ENCODE measurements at regions of chr6 and their contacts with region 1.

Region 1: DNA sequence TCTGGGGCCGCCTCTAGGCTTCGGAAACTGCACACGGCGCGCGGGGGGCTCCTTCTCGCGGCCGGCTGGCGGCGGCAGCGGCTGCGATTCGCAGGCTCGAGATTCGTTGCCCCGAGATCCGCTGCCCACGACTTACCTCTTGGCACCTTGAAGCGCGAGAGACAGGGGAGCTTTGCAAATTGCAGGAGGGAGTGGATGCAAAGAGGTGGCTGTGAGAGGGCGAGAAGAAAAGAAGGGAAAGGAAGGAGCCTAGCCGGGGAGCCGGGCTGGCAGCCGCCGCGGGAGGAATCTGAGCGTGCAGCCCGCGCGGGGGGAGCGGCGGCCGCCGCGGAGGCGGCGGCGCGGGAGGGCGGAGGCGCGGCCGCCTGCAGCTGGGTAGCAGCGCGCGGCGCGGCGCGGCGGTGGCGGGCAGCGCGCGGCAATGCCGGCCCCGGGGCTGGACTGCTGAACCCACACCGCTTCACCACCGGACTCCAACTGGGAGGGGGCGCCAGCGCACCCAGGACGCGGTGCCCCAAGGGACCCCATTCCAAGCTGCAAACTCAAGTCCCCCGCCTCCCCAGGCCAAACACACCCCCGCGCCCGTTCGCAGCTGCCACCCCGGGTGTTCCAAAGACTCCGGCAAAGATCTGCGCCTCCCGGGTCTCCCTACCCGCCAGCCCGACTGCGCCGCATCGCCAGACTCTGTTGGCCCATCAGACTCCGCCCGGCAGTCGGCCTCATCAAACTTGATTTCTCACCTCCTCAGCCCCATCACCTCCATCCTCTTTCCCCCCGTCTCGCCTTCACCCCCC is 44.2 kb upstream of the SUPT3H start:
- DNase-seq: peak; percentile 49 to 76
- H3K4me3 ChIP-seq: peak overlapping the region; percentile 98
- H3K27ac ChIP-seq: peak overlapping the region; percentile 72
- H3K4me1 ChIP-seq: peaks cover 22% of the 10 kb centered on the region
- H3K27me3 ChIP-seq: no peaks in the 10 kb centered on the region
- CTCF ChIP-seq: peak; percentile 17; the same call in 1 of the 2 replicates

Region 2: DNA sequence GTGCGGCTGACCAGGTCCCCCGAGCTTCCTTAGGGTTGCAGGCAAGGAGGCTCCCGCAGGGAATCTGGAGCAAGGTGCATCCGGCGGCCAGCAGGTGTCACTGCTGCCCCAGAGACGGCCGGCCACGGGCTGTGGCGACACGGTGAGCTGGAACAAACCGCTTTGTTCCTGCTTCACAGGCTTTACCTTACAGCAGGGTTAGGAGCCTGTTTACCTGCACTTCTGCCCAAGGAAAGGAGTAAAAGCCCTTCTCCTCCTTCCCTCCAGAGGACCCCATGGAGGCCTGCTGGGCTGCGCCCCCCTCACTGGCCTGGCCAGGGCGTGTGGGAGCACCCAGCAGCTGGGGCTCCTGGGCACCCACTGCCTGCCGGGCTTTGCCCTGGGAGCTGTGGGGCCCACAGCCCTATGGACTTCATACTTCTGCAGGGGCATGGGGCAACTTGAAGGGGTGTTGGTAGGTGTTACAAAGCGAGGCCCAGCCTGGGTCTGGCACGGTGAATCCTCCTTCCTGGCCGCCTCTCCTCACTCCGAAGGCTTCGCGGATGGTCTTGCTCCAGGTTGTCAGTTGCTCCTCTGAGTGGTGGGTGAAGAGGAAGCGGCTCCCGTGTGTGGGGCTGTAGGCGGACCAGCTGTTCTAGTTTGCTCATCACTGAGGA is 946.0 kb before region 1 on chr6:
- CTCF ChIA-PET with region 1: interaction called, 6 read pairs
- POLR2A ChIA-PET with region 1: no interaction called
- intact Hi-C with region 1: loop called (anchors 2 kb)
- DNase-seq: peak; percentile 54 to 86
- H3K4me3 ChIP-seq: no peak overlapping the region
- H3K27ac ChIP-seq: no peak overlapping the region
- H3K4me1 ChIP-seq: peaks cover 18% of the 10 kb centered on the region
- H3K27me3 ChIP-seq: no peaks in the 10 kb centered on the region
- CTCF ChIP-seq: peak; percentile 92

Region 3: DNA sequence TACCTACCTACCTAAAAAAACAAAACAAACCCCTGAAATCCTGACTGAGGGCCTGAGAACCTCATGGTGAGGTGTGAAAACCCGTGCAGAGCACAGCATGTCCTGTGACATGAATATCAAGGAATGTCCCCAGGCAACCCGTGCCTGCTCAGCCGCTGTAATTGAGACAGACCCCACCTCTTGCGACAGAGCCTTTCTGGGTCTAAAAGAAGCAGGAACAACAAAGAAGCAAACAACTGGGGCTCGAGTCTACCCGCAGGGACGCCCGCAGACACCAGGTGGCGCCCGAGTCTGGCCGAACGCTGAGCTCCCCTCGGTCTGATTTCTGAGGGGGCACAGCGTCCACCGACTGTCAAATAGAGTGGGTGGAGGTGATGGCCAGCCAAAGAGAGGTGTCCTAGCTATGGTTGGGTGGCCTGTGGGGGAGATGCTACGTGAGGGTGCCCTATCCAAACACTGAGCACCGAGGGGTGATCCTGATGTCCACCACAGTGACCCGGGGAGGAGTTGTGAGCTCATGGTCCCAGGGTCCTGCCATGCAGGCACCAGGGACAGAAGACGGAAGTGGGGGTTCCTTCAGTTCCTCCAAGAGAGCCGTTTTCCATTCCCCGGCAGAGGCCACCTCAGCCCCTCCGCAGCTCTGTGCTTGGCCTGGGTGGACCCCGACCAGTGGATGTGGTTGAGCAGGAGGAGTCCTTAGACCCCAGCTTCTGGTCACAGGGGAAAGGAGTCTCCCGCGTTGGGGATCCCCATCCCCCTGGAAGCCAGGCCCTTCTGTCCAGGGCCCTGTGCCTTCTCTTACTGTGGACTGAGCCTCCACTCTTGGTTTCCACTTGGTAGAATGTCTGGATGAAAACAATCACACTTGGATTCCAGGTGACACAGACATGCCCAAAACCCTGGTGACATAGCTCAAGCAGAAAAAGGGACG is 766.2 kb before region 1 on chr6:
- CTCF ChIA-PET with region 1: no interaction called
- POLR2A ChIA-PET with region 1: no interaction called
- intact Hi-C with region 1: loop called (anchors 1 kb)
- DNase-seq: peak; percentile 77 to 79
- H3K4me3 ChIP-seq: no peak overlapping the region
- H3K27ac ChIP-seq: peak overlapping the region; percentile 34; the same call in 1 of the 2 replicates
- H3K4me1 ChIP-seq: peaks cover 10% of the 10 kb centered on the region; the same call in 1 of the 2 replicates
- H3K27me3 ChIP-seq: no peaks in the 10 kb centered on the region
- CTCF ChIP-seq: peak; percentile 98

Region 4: GRCh38 chr6:45377554-45378333 is 44.2 kb before region 1 on chr6 and contains the start of gene SUPT3H:
- CTCF ChIA-PET with region 1: no interaction called
- POLR2A ChIA-PET with region 1: interaction called, 3 read pairs
- intact Hi-C with region 1: loop called (anchors 5 kb)
- DNase-seq: peak; percentile 76 to 89
- H3K4me3 ChIP-seq: peak within 1 kb of the TSS; percentile 93
- H3K27ac ChIP-seq: peak within 1 kb of the TSS; percentile 94
- H3K4me1 ChIP-seq: peaks cover 8% of the 10 kb centered on the region
- H3K27me3 ChIP-seq: no peaks in the 10 kb centered on the region
- CTCF ChIP-seq: no peak
- total RNA-seq, gene SUPT3H: 9.0 and 9.2 TPM in 2 replicates

Region 5: DNA sequence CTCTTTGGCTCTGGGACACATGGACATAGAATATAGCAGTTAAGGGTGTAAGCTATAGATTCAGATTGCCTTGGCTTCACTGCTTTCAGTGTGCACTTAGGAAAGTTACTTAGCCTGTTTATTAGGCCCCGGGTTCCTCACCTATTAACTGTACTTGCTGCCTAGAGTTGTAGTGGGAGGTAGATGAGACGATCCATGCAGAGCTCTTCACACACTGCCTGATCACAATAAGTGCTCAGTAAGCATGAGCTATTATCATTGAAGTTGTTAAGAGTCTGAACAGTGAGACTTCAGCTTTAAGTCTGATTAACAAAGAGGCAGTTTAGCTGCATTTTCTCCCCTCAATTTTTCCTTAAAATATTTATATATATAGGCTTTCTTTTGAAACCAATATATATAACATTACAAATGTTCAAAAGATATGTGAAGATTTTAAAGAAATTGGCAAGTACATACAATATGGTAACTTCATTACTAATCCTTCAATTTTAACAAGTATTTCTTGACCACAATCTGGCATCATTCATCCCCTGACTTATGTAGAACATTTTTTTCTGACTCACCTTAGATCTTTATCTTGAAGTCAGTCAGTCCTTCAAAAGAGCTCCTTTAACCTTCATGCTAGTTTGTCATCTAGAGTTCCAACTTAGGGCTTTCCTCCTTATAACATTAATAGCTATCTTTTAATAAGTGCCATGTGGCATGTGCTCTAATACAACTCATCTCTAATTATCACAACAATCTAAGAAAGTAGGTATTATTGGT is 23.6 kb before region 1 on chr6:
- CTCF ChIA-PET with region 1: no interaction called
- POLR2A ChIA-PET with region 1: no interaction called
- intact Hi-C with region 1: no loop called
- DNase-seq: peak in 1 of 2 experiments; percentile 81
- H3K4me3 ChIP-seq: no peak overlapping the region
- H3K27ac ChIP-seq: no peak overlapping the region
- H3K4me1 ChIP-seq: peaks cover 9% of the 10 kb centered on the region; the same call in 1 of the 2 replicates
- H3K27me3 ChIP-seq: no peaks in the 10 kb centered on the region
- CTCF ChIP-seq: no peak

Region 6: DNA sequence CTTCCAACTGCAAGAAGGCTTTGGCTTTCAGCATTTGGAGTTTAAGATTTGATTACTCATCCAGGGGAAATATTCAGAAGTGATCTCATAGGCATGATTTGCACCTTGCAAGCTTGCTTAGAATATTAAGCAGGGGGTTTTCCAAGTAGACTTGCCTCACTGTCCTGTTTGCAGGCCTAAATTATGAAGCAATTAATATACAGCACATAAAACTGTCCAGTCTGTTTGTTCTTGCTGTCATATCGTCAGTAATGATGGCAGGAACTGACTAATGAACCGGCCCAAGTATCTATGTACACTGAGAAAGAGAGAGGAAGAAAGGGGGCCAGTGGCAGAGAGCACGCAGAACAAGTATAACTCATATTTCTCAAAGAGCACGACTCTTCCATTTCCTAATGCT is 168.3 kb after region 1 on chr6:
- CTCF ChIA-PET with region 1: no interaction called
- POLR2A ChIA-PET with region 1: no interaction called
- intact Hi-C with region 1: loop called (anchors 5 kb)
- DNase-seq: peak in 1 of 2 experiments; percentile 87
- H3K4me3 ChIP-seq: no peak overlapping the region
- H3K27ac ChIP-seq: peak overlapping the region; percentile 88
- H3K4me1 ChIP-seq: peaks cover 62% of the 10 kb centered on the region
- H3K27me3 ChIP-seq: no peaks in the 10 kb centered on the region
- CTCF ChIP-seq: no peak

Region 7: GRCh38 chr6:45655630-45656422 is 233.9 kb after region 1 on chr6:
- CTCF ChIA-PET with region 1: no interaction called
- POLR2A ChIA-PET with region 1: no interaction called
- intact Hi-C with region 1: loop called (anchors 5 kb)
- DNase-seq: peak; percentile 72 to 98
- H3K4me3 ChIP-seq: peak overlapping the region; percentile 22; the same call in 1 of the 2 replicates
- H3K27ac ChIP-seq: peak overlapping the region; percentile 92
- H3K4me1 ChIP-seq: peaks cover 61% of the 10 kb centered on the region
- H3K27me3 ChIP-seq: no peaks in the 10 kb centered on the region
- CTCF ChIP-seq: no peak

Region 8: DNA sequence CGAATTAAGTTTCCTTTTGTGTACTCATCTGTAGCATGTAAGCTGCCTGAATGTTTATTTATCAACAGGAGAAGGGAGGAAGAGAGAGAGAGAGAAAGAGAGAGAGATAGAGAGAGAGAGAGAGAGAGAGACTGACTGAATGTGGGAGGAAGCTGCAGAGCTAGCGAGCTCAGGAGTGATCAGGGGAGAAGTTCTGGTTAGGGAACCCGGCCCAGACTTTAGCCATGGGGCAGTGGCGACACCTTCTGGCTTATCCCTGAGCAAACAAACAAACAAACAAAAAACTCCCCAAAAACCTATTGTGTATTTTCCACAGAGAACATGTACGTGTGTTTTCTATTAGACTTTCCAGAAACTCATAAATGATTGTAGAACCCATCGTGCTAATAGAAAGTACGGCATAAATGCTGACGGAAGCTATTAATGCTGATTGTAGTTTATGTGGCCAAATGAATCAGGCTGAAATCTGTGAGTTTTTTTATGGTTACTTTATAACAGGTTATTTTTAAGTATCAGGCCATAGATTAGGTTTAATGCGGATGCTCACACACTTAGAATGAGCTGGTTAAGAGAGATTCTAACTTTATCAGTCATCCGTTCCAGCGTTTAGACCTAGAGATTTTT is 500.9 kb after region 1 on chr6:
- CTCF ChIA-PET with region 1: interaction called, 4 read pairs
- POLR2A ChIA-PET with region 1: no interaction called
- intact Hi-C with region 1: loop called (anchors 2 kb)
- DNase-seq: peak; percentile 41 to 64
- H3K4me3 ChIP-seq: no peak overlapping the region
- H3K27ac ChIP-seq: no peak overlapping the region
- H3K4me1 ChIP-seq: 0 out of 2 replicates have a peak, but pooled peaks cover 3% of the 10 kb centered on the region
- H3K27me3 ChIP-seq: no peaks in the 10 kb centered on the region
- CTCF ChIP-seq: peak; percentile 84

Measured in PC-9 (cell line).